Activated CD4-positive, alpha-beta memory T cell treated with anti-CD3 and anti-CD28 coated beads for 36 hours (primary cell): ENCODE measurements at regions of chr11 and their contacts with region 1.

Region 1: GRCh38 chr11:63838678-63839507 is at the start of gene MARK2:
- DNase-seq: peak; percentile 100
- H3K4me3 Mint-ChIP-seq: peak within 1 kb of the TSS; percentile 89
- H3K27ac Mint-ChIP-seq: peak within 1 kb of the TSS; percentile 81
- H3K4me1 Mint-ChIP-seq: peaks cover 45% of the 10 kb centered on the region
- H3K27me3 Mint-ChIP-seq: no peaks in the 10 kb centered on the region
- total RNA-seq, gene MARK2: 20.0 to 29.0 TPM

Region 2: GRCh38 chr11:63737718-63738117 is 101.2 kb before region 1 on chr11:
- CTCF ChIA-PET with region 1: no interaction called
- POLR2A ChIA-PET with region 1: no interaction called
- intact Hi-C with region 1: no loop called
- DNase-seq: no peak
- H3K4me3 Mint-ChIP-seq: no peak overlapping the region
- H3K27ac Mint-ChIP-seq: no peak overlapping the region
- H3K4me1 Mint-ChIP-seq: peaks cover 2% of the 10 kb centered on the region
- H3K27me3 Mint-ChIP-seq: no peaks in the 10 kb centered on the region

Region 3: DNA sequence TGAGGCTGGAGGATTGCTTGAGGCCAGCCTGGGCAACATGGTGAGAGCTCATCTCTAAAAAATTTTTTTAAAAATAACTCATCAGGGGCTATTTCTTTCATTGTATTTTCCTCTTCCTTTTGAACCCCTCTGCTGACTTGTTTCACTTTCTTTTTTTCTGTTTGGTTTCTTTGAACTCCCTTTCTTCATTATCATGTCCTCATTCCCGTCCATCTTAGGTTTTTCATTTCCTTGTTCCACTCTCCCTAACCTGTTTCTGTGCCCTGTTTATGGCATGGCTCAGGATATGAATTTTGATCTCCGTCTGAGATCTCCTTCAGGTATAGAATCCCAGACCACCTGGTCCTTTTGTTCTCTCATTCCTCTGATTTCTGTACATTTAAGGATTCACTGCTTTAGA is 12.5 kb after region 1 on chr11:
- CTCF ChIA-PET with region 1: interaction called, 4 read pairs
- POLR2A ChIA-PET with region 1: no interaction called
- intact Hi-C with region 1: loop called (anchors 1 kb)
- DNase-seq: no peak
- H3K4me3 Mint-ChIP-seq: peak overlapping the region; percentile 9
- H3K27ac Mint-ChIP-seq: peak overlapping the region; percentile 24
- H3K4me1 Mint-ChIP-seq: peaks cover 68% of the 10 kb centered on the region
- H3K27me3 Mint-ChIP-seq: no peaks in the 10 kb centered on the region

Region 4: GRCh38 chr11:63906585-63906984 is 67.7 kb after region 1 on chr11:
- CTCF ChIA-PET with region 1: interaction called, 64 read pairs
- POLR2A ChIA-PET with region 1: interaction called, 3 read pairs
- intact Hi-C with region 1: loop called (anchors 1 kb)
- DNase-seq: peak; percentile 63
- H3K4me3 Mint-ChIP-seq: no peak overlapping the region
- H3K27ac Mint-ChIP-seq: no peak overlapping the region
- H3K4me1 Mint-ChIP-seq: no peaks in the 10 kb centered on the region
- H3K27me3 Mint-ChIP-seq: no peaks in the 10 kb centered on the region

Region 5: DNA sequence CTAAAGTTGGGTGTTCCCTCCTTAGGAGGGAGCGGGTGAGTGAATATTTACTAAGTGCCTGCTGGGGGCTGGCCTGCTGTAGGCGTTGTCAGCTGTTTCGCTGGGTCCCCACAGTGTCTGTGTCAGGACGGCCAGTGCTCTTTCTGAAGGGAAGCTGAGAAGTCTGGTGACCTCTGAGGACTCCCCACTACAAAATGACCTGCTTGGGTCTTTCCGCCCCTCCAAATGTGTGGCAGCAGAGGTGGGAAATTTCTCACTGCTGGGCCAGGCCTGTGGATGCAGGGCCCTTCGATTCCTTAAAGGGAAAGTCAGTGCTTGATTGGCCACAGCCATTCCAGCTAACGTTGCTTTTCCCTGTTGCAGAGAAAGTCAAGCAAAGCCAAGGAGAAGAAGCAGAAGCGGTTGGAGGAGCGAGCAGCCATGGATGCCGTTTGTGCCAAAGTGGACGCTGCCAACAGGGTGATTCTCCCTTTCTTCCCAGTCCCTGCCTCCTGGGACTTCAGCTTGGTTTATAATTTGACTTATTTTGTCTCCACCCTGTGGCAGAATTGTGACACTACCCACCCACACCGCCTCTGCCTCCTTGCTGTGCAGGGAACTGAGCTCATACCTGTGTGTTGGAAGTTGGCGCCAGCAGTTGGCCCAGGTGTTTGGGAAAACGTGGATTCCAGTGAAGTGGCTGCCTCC is 106.7 kb after region 1 on chr11:
- CTCF ChIA-PET with region 1: interaction called, 197 read pairs
- POLR2A ChIA-PET with region 1: no interaction called
- intact Hi-C with region 1: loop called (anchors 1 kb)
- DNase-seq: peak; percentile 60
- H3K4me3 Mint-ChIP-seq: no peak overlapping the region
- H3K27ac Mint-ChIP-seq: no peak overlapping the region
- H3K4me1 Mint-ChIP-seq: peaks cover 5% of the 10 kb centered on the region
- H3K27me3 Mint-ChIP-seq: no peaks in the 10 kb centered on the region

Region 6: DNA sequence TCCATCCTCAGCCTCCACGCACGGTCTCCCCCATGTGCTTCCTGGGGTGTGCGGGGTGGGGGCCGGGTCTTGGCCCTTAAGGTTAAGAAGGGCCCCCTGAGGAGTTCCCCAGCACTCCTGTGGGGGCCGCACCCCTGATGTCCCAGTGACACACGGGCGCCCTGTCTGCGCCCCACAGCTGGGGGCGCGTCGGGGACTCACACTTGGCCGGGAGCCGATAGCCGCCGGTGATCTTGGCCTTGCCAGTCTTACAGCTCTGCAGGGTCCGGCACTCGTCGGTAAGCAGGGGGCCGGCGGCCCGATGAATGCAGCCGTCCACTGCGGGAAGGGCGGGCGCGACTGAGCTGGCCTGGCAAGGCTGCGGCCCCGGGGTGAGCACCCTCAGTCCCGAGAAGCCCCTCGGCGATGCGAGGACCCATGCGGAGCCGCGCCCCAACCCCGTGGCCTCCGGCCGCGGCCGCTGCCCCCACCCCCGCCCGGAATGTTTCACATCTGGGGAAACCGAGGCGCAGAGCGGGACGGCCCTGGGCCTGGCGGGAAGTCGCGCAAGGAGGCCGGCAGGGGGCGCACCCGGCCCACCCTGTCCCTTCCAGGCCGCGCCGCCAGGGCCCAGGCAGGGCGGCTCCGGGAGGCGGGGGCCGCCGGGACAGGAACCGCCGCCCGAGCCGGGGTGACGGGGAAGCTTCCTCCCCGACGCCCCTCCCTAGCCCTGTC is 161.3 kb after region 1 on chr11:
- CTCF ChIA-PET with region 1: interaction called, 12 read pairs
- POLR2A ChIA-PET with region 1: no interaction called
- intact Hi-C with region 1: no loop called
- DNase-seq: peak; percentile 79
- H3K4me3 Mint-ChIP-seq: no peak overlapping the region
- H3K27ac Mint-ChIP-seq: no peak overlapping the region
- H3K4me1 Mint-ChIP-seq: peaks cover 5% of the 10 kb centered on the region
- H3K27me3 Mint-ChIP-seq: no peaks in the 10 kb centered on the region